ACHN (cell line): ENCODE measurements at regions of chrX and their contacts with region 1.

Region 1: GRCh38 chrX:151082076-151082948 is 94.1 kb upstream of the GPR50 start:
- DNase-seq: peak; percentile 26

Region 2: GRCh38 chrX:150772150-150772970 is 310.0 kb before region 1 on chrX:
- in situ Hi-C with region 1: loop called (anchors 25 kb)
- DNase-seq: peak; percentile 56

Region 3: GRCh38 chrX:150990890-150991289 is 91.4 kb before region 1 on chrX:
- in situ Hi-C with region 1: no loop called
- DNase-seq: no peak

Region 4: GRCh38 chrX:151177141-151178027 is 95.1 kb after region 1 on chrX:
- in situ Hi-C with region 1: no loop called
- DNase-seq: no peak